ENCODE measurements at regions of chr2 and their contacts with region 1.

Region 1: DNA sequence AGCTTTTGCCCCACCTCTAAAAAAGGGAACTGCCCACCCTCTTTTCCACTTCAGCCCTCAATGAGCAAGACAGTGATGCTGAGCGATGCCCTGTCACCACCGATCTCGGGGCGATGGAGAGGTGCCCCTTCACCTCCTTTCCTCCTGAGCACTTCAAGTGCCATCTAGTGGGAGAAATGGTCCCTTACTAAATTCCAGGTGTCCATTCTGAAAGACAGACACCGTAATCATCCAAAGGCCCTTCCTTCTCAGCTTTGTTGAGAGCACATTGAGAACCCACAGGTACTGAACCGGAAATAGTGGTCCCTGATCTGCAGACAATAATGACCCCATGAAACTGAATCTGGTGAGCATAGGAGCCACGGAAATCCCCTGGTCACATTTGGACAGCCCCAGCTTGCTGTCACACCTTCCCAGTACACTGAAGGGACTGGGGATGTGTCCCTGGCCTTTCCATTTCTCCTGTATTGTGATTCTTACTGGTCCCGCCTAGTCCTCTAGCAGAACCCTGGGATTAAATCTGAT is 38.5 kb downstream of the KCTD18 start:
- DNase-seq: peak; percentile 37 to 44 (median 40)
- H3K4me3 ChIP-seq: no peak overlapping the region
- H3K4me3 Mint-ChIP-seq: peak overlapping the region in 4 of 8 donors; percentile 47 to 84 (median 75)
- H3K27ac ChIP-seq: no peak overlapping the region
- H3K27ac Mint-ChIP-seq: peak overlapping the region in 5 of 7 donors; percentile 33 to 95 (median 88)
- H3K4me1 ChIP-seq: peaks cover 31% of the 10 kb centered on the region
- H3K4me1 Mint-ChIP-seq: peaks cover 28 to 37% (median 36%) of the 10 kb centered on the region in 4 donors
- H3K27me3 ChIP-seq: no peaks in the 10 kb centered on the region
- H3K27me3 Mint-ChIP-seq: no peaks in the 10 kb centered on the region

Region 2: DNA sequence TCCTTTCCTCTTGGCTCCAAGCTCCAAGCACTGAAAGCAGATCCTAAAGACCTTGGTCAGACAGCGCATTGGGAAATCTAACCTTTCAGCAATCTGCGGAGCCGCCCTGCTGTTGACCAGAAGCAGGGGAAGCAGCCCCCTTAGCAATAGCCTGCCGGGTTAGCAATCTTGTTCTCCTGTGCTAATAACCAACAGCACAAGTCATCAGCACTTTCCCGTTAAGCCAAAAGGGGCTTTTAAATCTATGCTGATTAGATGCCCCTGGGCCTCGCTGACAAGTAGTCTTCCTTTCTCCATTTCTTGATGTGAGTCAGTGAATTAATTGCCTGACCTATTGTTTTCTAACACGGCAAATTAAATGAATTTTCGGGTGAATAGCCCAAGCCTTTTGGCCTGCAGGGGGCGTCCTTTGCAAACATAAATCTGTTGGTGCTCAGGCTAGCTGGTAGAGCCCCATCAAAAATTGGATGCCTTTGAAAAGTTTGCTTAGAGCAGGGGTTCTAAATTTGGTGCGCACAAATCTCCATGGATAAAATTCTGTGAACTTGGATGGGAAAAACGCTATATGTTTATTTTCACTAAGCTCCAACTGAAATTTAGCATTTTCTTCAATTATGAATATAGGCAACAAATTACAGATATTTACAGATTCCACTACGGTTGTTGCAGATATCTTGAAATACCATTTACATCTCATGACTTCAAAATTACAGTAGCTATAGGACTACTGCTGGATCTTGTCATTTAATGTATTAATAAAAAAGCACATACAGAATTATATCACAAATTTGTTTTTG is 491.4 kb before region 1 on chr2:
- CTCF ChIA-PET with region 1: interaction called, 32 read pairs
- POLR2A ChIA-PET with region 1: interaction called, 3 read pairs
- intact Hi-C with region 1: loop called (anchors 1 kb)
- DNase-seq: peak; percentile 64 to 71 (median 69)
- H3K4me3 ChIP-seq: no peak overlapping the region
- H3K4me3 Mint-ChIP-seq: no peak overlapping the region
- H3K27ac ChIP-seq: no peak overlapping the region
- H3K27ac Mint-ChIP-seq: no peak overlapping the region
- H3K4me1 ChIP-seq: no peaks in the 10 kb centered on the region
- H3K4me1 Mint-ChIP-seq: peaks cover 0 to 5% (median under 1%) of the 10 kb centered on the region in 4 donors
- H3K27me3 ChIP-seq: no peaks in the 10 kb centered on the region
- H3K27me3 Mint-ChIP-seq: peaks cover 0 to 2% of the 10 kb centered on the region in 2 donors

Region 3: DNA sequence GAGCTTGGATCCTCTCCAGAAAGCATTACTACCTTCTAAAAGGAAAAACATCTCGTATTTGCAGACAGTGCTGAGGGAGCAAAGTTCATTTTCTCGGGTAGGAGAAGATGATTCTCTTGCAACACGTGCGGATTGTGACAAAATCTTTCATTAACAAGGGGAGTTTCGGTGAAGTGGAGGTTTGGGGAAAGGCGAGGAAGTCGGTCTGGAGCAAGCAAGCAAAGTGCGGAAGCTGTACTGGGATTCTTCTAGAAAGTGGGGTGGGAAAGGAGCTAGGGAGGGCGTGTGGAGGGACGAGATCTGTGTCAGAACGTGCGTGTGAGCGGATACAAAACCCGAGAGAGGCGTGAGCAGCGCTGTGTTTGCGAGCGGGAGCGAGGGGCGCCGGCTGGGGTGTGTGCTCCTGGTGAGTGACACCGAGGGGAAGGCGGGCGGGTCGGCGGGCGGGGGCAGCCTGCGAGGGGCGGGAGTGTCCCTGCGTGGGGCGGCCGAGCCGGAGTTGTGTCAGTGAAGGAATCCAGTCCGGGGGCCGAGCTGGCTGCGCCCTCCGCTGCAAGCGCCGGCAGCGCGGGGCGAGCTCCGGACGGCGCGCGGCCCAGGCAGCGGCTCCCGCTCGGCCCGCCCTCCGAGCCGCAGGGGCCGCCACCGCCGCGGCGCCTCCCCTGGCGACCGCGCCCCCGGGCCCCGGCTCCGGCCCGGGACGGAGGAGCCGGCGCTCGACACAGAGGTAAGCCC is 165.0 kb before region 1 on chr2 and contains the start of gene SPATS2L:
- CTCF ChIA-PET with region 1: interaction called, 3 read pairs
- POLR2A ChIA-PET with region 1: interaction called, 3 read pairs
- intact Hi-C with region 1: loop called (anchors 1 kb)
- DNase-seq: peak; percentile 23 to 57 (median 31)
- H3K4me3 ChIP-seq: peak within 1 kb of the TSS; percentile 48 to 55
- H3K4me3 Mint-ChIP-seq: peak within 1 kb of the TSS; percentile 84 to 100 (median 93)
- H3K27ac ChIP-seq: no peak within 1 kb of the TSS
- H3K27ac Mint-ChIP-seq: peak within 1 kb of the TSS; percentile 21 to 91 (median 77)
- H3K4me1 ChIP-seq: peaks cover 4% of the 10 kb centered on the region
- H3K4me1 Mint-ChIP-seq: peaks cover 7 to 18% (median 10%) of the 10 kb centered on the region in 4 donors
- H3K27me3 ChIP-seq: no peaks in the 10 kb centered on the region
- H3K27me3 Mint-ChIP-seq: peaks cover 0 to 4% of the 10 kb centered on the region in 2 donors
- total RNA-seq, gene SPATS2L: 5.9 to 6.6 TPM

Region 4: GRCh38 chr2:200443916-200444315 is 27.5 kb before region 1 on chr2:
- CTCF ChIA-PET with region 1: interaction called, 19 read pairs
- POLR2A ChIA-PET with region 1: no interaction called
- intact Hi-C with region 1: no loop called
- DNase-seq: no peak
- H3K4me3 ChIP-seq: no peak overlapping the region
- H3K4me3 Mint-ChIP-seq: no peak overlapping the region
- H3K27ac ChIP-seq: no peak overlapping the region
- H3K27ac Mint-ChIP-seq: no peak overlapping the region
- H3K4me1 ChIP-seq: no peaks in the 10 kb centered on the region
- H3K4me1 Mint-ChIP-seq: peaks cover 0 to 9% (median 4%) of the 10 kb centered on the region in 4 donors
- H3K27me3 ChIP-seq: no peaks in the 10 kb centered on the region
- H3K27me3 Mint-ChIP-seq: no peaks in the 10 kb centered on the region

Region 5: DNA sequence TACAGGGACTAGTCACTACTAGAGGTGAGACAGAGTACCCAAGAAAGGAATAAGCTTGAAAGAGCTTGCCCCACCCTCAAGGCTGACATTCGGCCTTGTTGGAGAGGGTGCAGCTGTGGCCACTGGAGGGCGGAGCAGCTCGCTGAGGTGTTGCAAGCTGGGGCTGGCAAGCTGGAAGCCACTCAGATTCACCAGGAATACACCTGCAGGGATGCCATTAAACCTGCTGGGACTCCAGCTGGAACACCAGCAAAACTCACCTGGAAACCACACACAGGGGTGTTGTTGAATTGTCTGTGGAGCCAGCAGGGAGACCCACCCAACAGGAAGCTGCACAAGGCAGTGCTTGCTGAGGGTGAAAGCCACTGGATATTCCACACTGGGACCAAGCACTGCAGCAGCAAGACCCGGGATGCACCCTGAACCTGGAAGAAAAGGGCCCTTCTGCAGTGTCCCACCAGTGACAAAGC is 12.4 kb after region 1 on chr2:
- CTCF ChIA-PET with region 1: interaction called, 87 read pairs
- POLR2A ChIA-PET with region 1: interaction called, 6 read pairs
- intact Hi-C with region 1: no loop called
- DNase-seq: no peak
- H3K4me3 ChIP-seq: no peak overlapping the region
- H3K4me3 Mint-ChIP-seq: no peak overlapping the region
- H3K27ac ChIP-seq: no peak overlapping the region
- H3K27ac Mint-ChIP-seq: no peak overlapping the region
- H3K4me1 ChIP-seq: no peaks in the 10 kb centered on the region
- H3K4me1 Mint-ChIP-seq: peaks cover 0 to 5% (median 1%) of the 10 kb centered on the region in 4 donors
- H3K27me3 ChIP-seq: no peaks in the 10 kb centered on the region
- H3K27me3 Mint-ChIP-seq: no peaks in the 10 kb centered on the region

Region 6: GRCh38 chr2:200537600-200537999 is 66.2 kb after region 1 on chr2:
- CTCF ChIA-PET with region 1: no interaction called
- POLR2A ChIA-PET with region 1: no interaction called
- intact Hi-C with region 1: no loop called
- DNase-seq: no peak
- H3K4me3 ChIP-seq: no peak overlapping the region
- H3K4me3 Mint-ChIP-seq: no peak overlapping the region
- H3K27ac ChIP-seq: no peak overlapping the region
- H3K27ac Mint-ChIP-seq: no peak overlapping the region
- H3K4me1 ChIP-seq: no peaks in the 10 kb centered on the region
- H3K4me1 Mint-ChIP-seq: no peaks in the 10 kb centered on the region
- H3K27me3 ChIP-seq: no peaks in the 10 kb centered on the region
- H3K27me3 Mint-ChIP-seq: no peaks in the 10 kb centered on the region

Region 7: DNA sequence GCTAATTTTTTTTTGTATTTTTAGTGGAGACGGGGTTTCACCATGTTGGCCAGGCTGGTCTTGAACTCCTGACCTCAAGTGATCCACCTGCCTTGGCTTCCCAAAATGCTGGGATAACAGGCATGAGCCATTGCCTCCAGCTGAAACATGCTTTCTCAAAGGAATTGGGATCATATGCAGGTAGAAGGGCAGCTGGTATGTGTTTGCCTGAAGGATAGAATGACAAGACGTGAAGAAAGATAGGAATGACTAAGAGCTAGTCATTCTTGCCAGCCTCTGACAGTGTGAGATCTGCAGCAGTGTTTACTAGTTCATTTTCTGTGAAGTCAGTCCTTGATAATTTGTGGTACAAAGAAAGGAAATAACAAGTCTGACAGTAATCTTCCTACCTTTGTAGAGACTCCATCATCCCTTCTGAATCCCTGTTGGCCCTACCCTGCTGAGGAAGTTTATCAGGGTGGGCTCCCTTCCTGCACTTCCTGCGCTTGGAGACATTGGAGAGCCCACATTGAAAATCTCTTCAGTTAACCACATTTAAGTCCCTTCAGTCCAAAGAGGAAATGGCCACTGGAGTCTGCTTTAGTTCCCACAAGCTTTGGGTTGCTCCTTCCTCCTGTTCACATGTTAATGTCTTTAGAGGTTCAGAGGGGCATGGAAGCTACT is 659.3 kb after region 1 on chr2:
- CTCF ChIA-PET with region 1: no interaction called
- POLR2A ChIA-PET with region 1: no interaction called
- intact Hi-C with region 1: no loop called
- DNase-seq: peak; percentile 42 to 85 (median 55)
- H3K4me3 ChIP-seq: peak overlapping the region in 1 of 2 donors; percentile 34
- H3K4me3 Mint-ChIP-seq: peak overlapping the region; percentile 72 to 86 (median 80)
- H3K27ac ChIP-seq: peak overlapping the region; percentile 64
- H3K27ac Mint-ChIP-seq: peak overlapping the region; percentile 87 to 98 (median 97)
- H3K4me1 ChIP-seq: peaks cover 89% of the 10 kb centered on the region
- H3K4me1 Mint-ChIP-seq: peaks cover 64 to 81% (median 72%) of the 10 kb centered on the region in 4 donors
- H3K27me3 ChIP-seq: no peaks in the 10 kb centered on the region
- H3K27me3 Mint-ChIP-seq: no peaks in the 10 kb centered on the region

Measured in CD4-positive, alpha-beta memory T cell (primary cell).